ENCODE measurements at regions of chr16 and their contacts with region 1.

Region 1: DNA sequence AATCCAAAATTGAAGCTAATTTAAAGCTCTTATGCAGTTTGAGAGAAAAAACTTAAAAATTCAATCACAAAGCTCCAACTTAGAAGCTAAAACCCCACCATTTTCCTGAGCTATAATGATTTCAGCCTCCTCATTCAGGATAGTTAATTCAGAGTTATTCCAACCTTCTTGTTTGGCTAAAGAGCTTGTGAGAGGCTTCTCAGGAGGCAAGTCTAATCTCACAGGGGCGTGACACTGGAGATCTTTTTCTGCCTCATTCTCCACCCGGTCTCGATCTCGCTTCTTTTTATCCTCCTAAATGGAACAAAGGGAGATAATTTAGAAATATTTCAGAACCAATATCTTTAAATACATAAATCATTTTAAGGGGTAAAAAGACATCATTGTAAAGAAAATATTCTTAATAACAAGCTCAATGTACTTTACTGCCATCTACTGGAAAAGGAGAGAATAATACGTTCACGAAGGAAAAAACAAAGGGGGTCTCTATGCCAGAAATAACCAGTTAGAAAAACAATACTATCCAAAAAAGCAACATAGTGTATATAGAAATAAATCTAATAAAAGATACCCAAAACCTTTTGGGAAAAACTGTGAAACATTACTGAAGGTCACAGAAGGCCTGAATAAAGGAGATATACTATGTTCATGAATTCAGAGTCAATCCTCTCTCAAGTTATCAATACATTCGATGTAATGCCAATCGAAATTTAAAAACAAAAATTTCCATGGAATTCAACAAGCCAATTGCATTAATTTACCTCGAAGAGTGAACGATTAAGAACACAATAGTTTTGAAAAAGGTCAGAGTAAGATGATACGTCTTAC is 13.9 kb downstream of the BRD7 start:
- DNase-seq: no peak
- ATAC-seq: no peak
- H3K4me3 ChIP-seq: no peak overlapping the region
- H3K27ac ChIP-seq: no peak overlapping the region
- H3K4me1 ChIP-seq: no peaks in the 10 kb centered on the region
- H3K27me3 ChIP-seq: no peaks in the 10 kb centered on the region
- CTCF ChIP-seq: peak; percentile 60
- POLR2A ChIP-seq: no peak
- RAD21 ChIP-seq: peak; percentile 50

Region 2: GRCh38 chr16:50152807-50153452 is 201.9 kb before region 1 on chr16 and contains the start of gene TENT4B:
- CTCF ChIA-PET with region 1: interaction called, 6 read pairs
- POLR2A ChIA-PET with region 1: no interaction called
- dilution Hi-C with region 1: no loop called
- in situ Hi-C with region 1: no loop called
- intact Hi-C with region 1: loop called (anchors 5 kb)
- DNase-seq: peak; percentile 66
- ATAC-seq: peak; percentile 90
- H3K4me3 ChIP-seq: peak within 1 kb of the TSS; percentile 97
- H3K27ac ChIP-seq: peak within 1 kb of the TSS; percentile 98
- H3K4me1 ChIP-seq: peaks cover 5% of the 10 kb centered on the region
- H3K27me3 ChIP-seq: no peaks in the 10 kb centered on the region
- CTCF ChIP-seq: no peak
- POLR2A ChIP-seq: peak; percentile 85
- RAD21 ChIP-seq: no peak
- total RNA-seq, gene TENT4B: 7.0 and 12.5 TPM in 2 replicates

Region 3: DNA sequence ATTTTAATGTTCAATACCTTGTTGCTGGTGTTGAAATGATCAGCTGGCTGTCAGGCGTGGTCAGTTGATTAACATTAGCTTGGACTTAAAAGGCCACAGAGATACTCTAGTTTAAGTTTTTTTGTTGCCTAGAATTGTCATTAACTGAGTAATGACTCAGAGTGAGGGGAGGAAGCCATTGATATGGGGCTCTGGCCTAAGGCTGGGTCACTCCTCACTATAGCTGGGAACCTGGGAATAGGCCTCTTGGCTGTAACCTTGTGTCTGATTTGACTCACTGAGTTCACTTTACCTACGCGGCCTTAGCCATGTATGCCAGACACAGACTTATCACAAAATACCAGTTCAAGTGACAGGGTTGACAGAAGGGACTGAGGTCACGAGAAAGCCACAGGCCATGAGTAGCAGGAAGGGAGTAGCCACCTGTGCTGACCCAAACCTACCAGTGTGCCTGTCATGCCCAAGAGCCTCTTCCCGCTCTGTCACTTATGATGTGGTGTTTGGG is 126.4 kb before region 1 on chr16:
- CTCF ChIA-PET with region 1: interaction called, 3 read pairs
- POLR2A ChIA-PET with region 1: no interaction called
- dilution Hi-C with region 1: no loop called
- in situ Hi-C with region 1: loop called (anchors 5 kb)
- intact Hi-C with region 1: no loop called
- DNase-seq: no peak
- ATAC-seq: no peak
- H3K4me3 ChIP-seq: no peak overlapping the region
- H3K27ac ChIP-seq: no peak overlapping the region
- H3K4me1 ChIP-seq: peaks cover 9% of the 10 kb centered on the region
- H3K27me3 ChIP-seq: no peaks in the 10 kb centered on the region
- CTCF ChIP-seq: no peak
- POLR2A ChIP-seq: no peak
- RAD21 ChIP-seq: no peak

Region 4: DNA sequence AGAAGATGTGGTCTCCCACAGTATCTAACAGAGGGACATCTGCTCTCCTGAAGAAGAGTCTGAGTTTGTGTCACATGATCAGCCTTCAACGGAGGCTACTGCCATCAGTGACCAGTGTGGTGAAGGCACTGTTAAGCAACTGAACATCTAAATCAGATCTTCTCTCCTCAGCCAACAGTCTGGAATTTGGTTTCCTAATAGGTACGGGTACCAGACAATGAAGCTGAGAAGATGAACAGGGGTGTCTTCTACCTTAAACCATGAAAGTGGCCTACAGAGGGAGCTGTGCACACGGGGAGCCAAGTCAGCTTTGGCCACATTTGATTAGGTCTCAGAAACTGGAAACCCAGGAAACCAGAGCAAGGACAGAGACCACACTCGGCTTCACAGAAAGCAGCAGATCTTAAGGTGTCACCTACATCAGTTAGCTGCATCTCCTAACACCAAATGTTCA is 27.9 kb before region 1 on chr16:
- CTCF ChIA-PET with region 1: interaction called, 4 read pairs
- POLR2A ChIA-PET with region 1: no interaction called
- dilution Hi-C with region 1: no loop called
- in situ Hi-C with region 1: no loop called
- intact Hi-C with region 1: loop called (anchors 1 kb)
- DNase-seq: peak; percentile 36
- ATAC-seq: peak; percentile 68
- H3K4me3 ChIP-seq: no peak overlapping the region
- H3K27ac ChIP-seq: no peak overlapping the region
- H3K4me1 ChIP-seq: peaks cover 3% of the 10 kb centered on the region; the same call in 1 of the 2 replicates
- H3K27me3 ChIP-seq: no peaks in the 10 kb centered on the region
- CTCF ChIP-seq: peak; percentile 46
- POLR2A ChIP-seq: no peak
- RAD21 ChIP-seq: peak; percentile 45

Region 5: DNA sequence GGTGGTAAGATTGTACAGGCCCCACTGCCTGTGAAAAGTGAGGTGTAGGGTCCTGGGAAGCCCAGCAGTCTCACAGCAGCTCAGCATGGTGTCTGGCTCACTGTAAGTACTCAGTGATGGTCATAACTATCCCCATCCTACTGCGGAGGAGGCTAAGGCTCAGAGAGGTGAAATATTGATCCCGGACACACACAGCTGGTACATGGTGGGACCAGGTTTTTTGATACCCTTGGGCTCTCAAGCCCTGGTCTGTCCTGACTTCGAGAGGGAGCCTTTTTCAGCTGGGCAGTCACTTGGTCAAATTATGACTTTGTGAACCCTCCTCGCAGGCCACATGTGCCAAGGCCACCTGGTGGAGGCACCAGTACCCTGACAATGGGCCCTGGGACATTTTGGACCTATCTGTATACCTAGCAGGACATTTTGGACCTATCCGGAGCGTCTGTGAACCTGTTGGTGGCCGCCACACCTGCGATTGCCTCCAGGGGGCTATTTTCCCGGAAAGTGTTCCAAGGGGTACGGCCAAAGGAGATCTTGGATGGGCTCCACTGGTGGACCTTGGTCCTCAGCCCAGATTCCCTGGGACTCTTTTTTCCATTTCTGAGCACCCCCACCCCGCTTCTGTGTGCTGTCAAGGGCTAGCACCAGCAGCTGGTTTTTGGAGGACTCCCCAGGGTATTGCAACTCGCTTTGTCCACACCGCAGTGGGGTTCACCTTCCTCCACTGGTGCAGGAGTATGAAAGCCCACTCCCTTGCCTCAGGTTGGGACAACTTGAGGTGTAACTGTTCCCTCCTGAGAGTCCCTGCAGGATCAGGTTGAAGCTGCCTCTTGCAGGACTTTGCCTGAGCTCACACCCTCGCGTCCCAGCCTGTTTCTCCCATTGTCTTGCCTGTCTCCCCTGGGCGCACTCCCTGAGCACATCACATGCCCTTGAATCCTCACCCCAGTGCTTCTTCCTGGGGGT is 109.8 kb after region 1 on chr16:
- CTCF ChIA-PET with region 1: no interaction called
- POLR2A ChIA-PET with region 1: no interaction called
- dilution Hi-C with region 1: no loop called
- in situ Hi-C with region 1: no loop called
- intact Hi-C with region 1: no loop called
- DNase-seq: no peak
- ATAC-seq: no peak
- H3K4me3 ChIP-seq: no peak overlapping the region
- H3K27ac ChIP-seq: no peak overlapping the region
- H3K4me1 ChIP-seq: 0 out of 2 replicates have a peak, but pooled peaks cover 2% of the 10 kb centered on the region
- H3K27me3 ChIP-seq: peaks cover 40% of the 10 kb centered on the region
- CTCF ChIP-seq: no peak
- POLR2A ChIP-seq: no peak
- RAD21 ChIP-seq: no peak

Region 6: GRCh38 chr16:50478761-50479125 is 123.9 kb after region 1 on chr16:
- CTCF ChIA-PET with region 1: no interaction called
- POLR2A ChIA-PET with region 1: no interaction called
- dilution Hi-C with region 1: no loop called
- in situ Hi-C with region 1: no loop called
- intact Hi-C with region 1: no loop called
- DNase-seq: no peak
- ATAC-seq: no peak
- H3K4me3 ChIP-seq: no peak overlapping the region
- H3K27ac ChIP-seq: no peak overlapping the region
- H3K4me1 ChIP-seq: no peaks in the 10 kb centered on the region
- H3K27me3 ChIP-seq: peaks cover 2% of the 10 kb centered on the region; the same call in 1 of the 2 replicates
- CTCF ChIP-seq: no peak
- POLR2A ChIP-seq: no peak
- RAD21 ChIP-seq: no peak

Region 7: GRCh38 chr16:50520451-50521245 is 165.8 kb after region 1 on chr16:
- CTCF ChIA-PET with region 1: no interaction called
- POLR2A ChIA-PET with region 1: no interaction called
- dilution Hi-C with region 1: no loop called
- in situ Hi-C with region 1: no loop called
- intact Hi-C with region 1: no loop called
- DNase-seq: no peak
- ATAC-seq: no peak
- H3K4me3 ChIP-seq: no peak overlapping the region
- H3K27ac ChIP-seq: no peak overlapping the region
- H3K4me1 ChIP-seq: no peaks in the 10 kb centered on the region
- H3K27me3 ChIP-seq: no peaks in the 10 kb centered on the region
- CTCF ChIP-seq: no peak
- POLR2A ChIP-seq: no peak
- RAD21 ChIP-seq: no peak

Region 8: GRCh38 chr16:50709053-50709684 is 354.3 kb after region 1 on chr16:
- CTCF ChIA-PET with region 1: no interaction called
- POLR2A ChIA-PET with region 1: no interaction called
- dilution Hi-C with region 1: no loop called
- in situ Hi-C with region 1: no loop called
- intact Hi-C with region 1: no loop called
- DNase-seq: no peak
- ATAC-seq: no peak
- H3K4me3 ChIP-seq: no peak overlapping the region
- H3K27ac ChIP-seq: no peak overlapping the region
- H3K4me1 ChIP-seq: no peaks in the 10 kb centered on the region
- H3K27me3 ChIP-seq: no peaks in the 10 kb centered on the region; the same call in none of the 2 replicates
- CTCF ChIP-seq: no peak
- POLR2A ChIP-seq: no peak
- RAD21 ChIP-seq: no peak